ENCODE measurements at regions of chr4 and their contacts with region 1.

Region 1: DNA sequence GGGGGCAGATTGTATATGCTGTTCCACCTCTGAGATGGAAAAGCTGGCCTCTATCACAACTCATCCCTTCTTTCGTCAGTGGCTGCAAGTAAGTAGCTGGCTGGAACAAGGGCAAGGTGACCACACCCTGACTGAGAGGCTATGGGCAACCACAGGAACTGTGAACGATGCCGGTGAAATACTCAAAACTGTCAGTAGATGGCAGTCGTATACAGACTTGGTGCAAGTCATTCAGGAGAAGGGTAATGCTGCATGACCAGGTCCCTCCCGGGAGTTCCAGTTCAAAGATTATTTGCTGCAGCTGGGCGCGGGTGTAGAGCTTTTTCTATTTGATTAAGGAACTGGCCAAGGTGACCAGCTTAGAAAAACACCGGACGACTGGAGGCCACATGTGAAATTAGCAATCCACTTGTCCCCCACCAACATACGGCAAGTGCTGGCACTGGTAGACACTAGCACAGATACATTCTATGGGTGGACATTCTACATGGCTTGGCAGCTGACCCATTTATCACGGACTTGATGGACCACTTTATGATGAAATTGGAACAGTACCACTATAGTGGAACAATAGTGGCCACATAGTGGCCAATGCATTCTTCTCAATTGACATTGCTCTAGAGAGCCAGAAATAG is 726.7 kb downstream of the TRAM1L1 start:
- DNase-seq: peak; percentile 82
- ATAC-seq: peak; percentile 98
- H3K4me3 ChIP-seq: no peak overlapping the region
- H3K27ac ChIP-seq: no peak overlapping the region
- H3K4me1 ChIP-seq: no peaks in the 10 kb centered on the region
- H3K27me3 ChIP-seq: no peaks in the 10 kb centered on the region
- CTCF ChIP-seq: peak; percentile 90
- EP300 ChIP-seq: no peak
- POLR2A ChIP-seq: no peak
- RAD21 ChIP-seq: peak; percentile 52; the same call in 1 of the 2 replicates

Region 2: GRCh38 chr4:116328261-116328860 is 30.3 kb before region 1 on chr4:
- CTCF ChIA-PET with region 1: no interaction called
- POLR2A ChIA-PET with region 1: no interaction called
- in situ Hi-C with region 1: no loop called
- intact Hi-C with region 1: no loop called
- DNase-seq: no peak
- ATAC-seq: no peak
- H3K4me3 ChIP-seq: no peak overlapping the region
- H3K27ac ChIP-seq: no peak overlapping the region
- H3K4me1 ChIP-seq: no peaks in the 10 kb centered on the region
- H3K27me3 ChIP-seq: no peaks in the 10 kb centered on the region
- CTCF ChIP-seq: no peak
- EP300 ChIP-seq: no peak
- POLR2A ChIP-seq: no peak
- RAD21 ChIP-seq: no peak

Region 3: DNA sequence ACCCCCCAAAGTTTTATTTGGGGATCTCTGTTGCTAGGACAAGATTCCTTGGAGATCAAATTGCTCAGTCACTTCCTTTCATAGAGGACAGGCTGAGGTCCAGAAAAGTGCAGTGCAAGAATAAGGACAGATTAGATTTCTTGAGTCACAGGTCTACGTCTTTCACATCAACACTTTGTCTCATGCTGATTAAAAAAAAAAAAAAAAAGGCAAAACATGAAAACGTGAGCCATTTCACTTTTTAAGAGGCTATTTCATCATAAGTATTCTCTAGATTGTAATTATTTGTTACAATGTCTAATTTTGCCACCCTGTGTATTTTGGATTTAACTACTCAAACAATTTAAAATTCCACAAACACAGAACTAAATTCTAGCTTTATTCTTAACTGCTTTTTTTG is 79.7 kb after region 1 on chr4:
- CTCF ChIA-PET with region 1: no interaction called
- POLR2A ChIA-PET with region 1: no interaction called
- in situ Hi-C with region 1: no loop called
- intact Hi-C with region 1: no loop called
- DNase-seq: no peak
- ATAC-seq: no peak
- H3K4me3 ChIP-seq: no peak overlapping the region
- H3K27ac ChIP-seq: no peak overlapping the region
- H3K4me1 ChIP-seq: no peaks in the 10 kb centered on the region
- H3K27me3 ChIP-seq: no peaks in the 10 kb centered on the region
- CTCF ChIP-seq: no peak
- EP300 ChIP-seq: no peak
- POLR2A ChIP-seq: no peak
- RAD21 ChIP-seq: no peak

Region 4: DNA sequence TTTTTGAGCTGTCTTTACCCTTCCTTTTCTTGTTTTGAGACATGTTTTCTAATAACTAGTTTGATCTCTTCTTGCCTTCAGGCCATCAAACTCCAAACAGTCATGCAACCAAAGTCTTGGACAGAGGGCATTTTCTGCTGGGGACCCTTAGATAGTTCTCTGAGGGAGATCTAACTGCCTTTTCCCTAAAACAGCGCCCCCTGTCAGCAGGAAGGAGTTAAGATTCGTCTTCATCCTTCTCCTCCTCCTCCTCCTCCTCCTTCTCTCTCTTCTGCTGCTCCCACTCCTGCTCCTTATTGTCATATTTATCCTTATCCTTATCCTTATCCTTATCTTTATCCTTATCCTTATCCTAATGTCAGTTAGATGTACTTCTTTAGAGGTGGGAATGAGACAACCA is 309.5 kb after region 1 on chr4:
- CTCF ChIA-PET with region 1: interaction called, 4 read pairs
- POLR2A ChIA-PET with region 1: no interaction called
- in situ Hi-C with region 1: no loop called
- intact Hi-C with region 1: loop called (anchors 1 kb)
- DNase-seq: no peak
- ATAC-seq: no peak
- H3K4me3 ChIP-seq: no peak overlapping the region
- H3K27ac ChIP-seq: no peak overlapping the region
- H3K4me1 ChIP-seq: no peaks in the 10 kb centered on the region
- H3K27me3 ChIP-seq: no peaks in the 10 kb centered on the region
- CTCF ChIP-seq: peak; percentile 32; the same call in 1 of the 2 replicates
- EP300 ChIP-seq: no peak
- POLR2A ChIP-seq: no peak
- RAD21 ChIP-seq: no peak

Region 5: DNA sequence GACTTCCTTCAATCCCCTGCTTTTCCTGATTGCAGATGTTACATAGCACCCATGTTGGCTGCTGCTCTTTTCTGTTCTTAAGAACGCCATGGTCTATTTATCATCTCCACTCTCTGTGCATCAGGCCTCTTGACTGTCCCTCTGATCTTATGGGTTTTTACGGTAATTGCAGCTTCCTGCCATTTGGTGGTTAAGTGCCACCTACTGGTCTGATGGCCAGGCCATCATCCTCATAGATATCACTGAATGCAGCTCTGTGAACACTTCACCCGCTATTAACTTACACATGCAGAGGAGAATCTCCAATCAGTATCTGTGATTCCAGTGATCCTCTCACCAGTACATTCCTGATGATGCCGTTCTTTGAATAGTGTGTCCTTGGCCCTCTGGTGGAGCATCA is 344.2 kb after region 1 on chr4:
- CTCF ChIA-PET with region 1: no interaction called
- POLR2A ChIA-PET with region 1: no interaction called
- in situ Hi-C with region 1: no loop called
- intact Hi-C with region 1: loop called (anchors 1 kb)
- DNase-seq: peak; percentile 24
- ATAC-seq: peak; percentile 96
- H3K4me3 ChIP-seq: no peak overlapping the region
- H3K27ac ChIP-seq: no peak overlapping the region
- H3K4me1 ChIP-seq: no peaks in the 10 kb centered on the region
- H3K27me3 ChIP-seq: no peaks in the 10 kb centered on the region
- CTCF ChIP-seq: peak; percentile 39
- EP300 ChIP-seq: no peak
- POLR2A ChIP-seq: no peak
- RAD21 ChIP-seq: no peak

Region 6: DNA sequence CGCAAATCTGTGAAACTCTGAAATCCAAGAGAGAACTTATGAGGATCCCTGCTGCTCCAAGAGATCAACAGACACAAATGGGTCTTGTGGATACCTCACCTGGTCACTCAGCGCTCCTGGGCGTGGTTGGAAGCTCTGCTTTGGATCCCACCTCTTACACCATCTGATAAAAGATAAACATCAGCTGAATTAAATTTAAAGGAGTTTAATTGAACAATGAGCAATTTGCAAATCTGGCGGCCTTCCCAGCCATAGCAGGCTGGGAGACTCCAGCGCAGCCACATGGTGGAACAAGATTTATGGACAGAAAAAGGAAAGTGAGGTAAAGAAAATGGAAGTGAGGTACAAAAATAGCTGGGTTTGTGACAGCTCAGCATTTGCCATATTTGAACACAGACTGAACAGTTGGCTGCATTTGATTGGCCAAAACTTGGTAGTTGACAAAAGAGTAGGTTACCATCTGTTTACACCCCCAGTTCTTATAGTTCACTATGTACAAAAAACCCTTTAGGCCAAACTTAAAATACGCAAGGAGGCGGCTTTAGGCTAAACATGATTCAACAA is 1238.3 kb after region 1 on chr4:
- CTCF ChIA-PET with region 1: no interaction called
- POLR2A ChIA-PET with region 1: no interaction called
- in situ Hi-C with region 1: no loop called
- intact Hi-C with region 1: no loop called
- DNase-seq: no peak
- ATAC-seq: no peak
- H3K4me3 ChIP-seq: no peak overlapping the region
- H3K27ac ChIP-seq: no peak overlapping the region
- H3K4me1 ChIP-seq: no peaks in the 10 kb centered on the region
- H3K27me3 ChIP-seq: no peaks in the 10 kb centered on the region
- CTCF ChIP-seq: no peak
- EP300 ChIP-seq: no peak
- POLR2A ChIP-seq: no peak
- RAD21 ChIP-seq: no peak

Region 7: DNA sequence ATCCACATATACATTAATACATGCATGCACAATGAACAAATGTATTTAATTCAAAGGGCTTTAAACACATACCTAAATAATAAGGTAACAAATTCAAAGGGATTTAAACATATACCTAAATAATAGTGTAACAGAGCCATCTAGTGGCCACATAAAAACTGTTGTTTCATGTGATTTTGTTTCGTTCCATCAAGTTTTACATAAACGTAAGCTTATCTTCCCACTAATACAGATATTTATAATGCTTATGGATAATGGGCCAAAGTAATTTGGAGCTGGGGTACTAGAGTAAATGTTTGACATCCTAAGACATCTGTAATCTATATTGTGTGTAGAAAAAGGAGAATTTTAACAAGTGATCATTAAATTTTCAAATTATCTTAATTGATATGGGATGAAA is 1911.8 kb after region 1 on chr4:
- CTCF ChIA-PET with region 1: no interaction called
- POLR2A ChIA-PET with region 1: no interaction called
- in situ Hi-C with region 1: no loop called
- intact Hi-C with region 1: loop called (anchors 2 kb)
- DNase-seq: peak; percentile 41
- ATAC-seq: no peak
- H3K4me3 ChIP-seq: no peak overlapping the region
- H3K27ac ChIP-seq: no peak overlapping the region
- H3K4me1 ChIP-seq: no peaks in the 10 kb centered on the region
- H3K27me3 ChIP-seq: no peaks in the 10 kb centered on the region
- CTCF ChIP-seq: peak; percentile 56
- EP300 ChIP-seq: no peak
- POLR2A ChIP-seq: no peak
- RAD21 ChIP-seq: peak; percentile 19; the same call in 1 of the 2 replicates

Measured in HepG2 (cell line).